BJ (cell line): ENCODE measurements at regions of chr4 and their contacts with region 1.

Region 1: GRCh38 chr4:40924096-40924792 is 174.5 kb downstream of the NSUN7 start:
- DNase-seq: no peak
- H3K4me3 ChIP-seq: no peak overlapping the region
- H3K27me3 ChIP-seq: no peaks in the 10 kb centered on the region
- CTCF ChIP-seq: peak; percentile 94

Region 2: GRCh38 chr4:40140196-40140595 is 784.0 kb before region 1 on chr4:
- CTCF ChIA-PET with region 1: no interaction called
- POLR2A ChIA-PET with region 1: no interaction called
- DNase-seq: no peak
- H3K4me3 ChIP-seq: no peak overlapping the region
- H3K27me3 ChIP-seq: no peaks in the 10 kb centered on the region
- CTCF ChIP-seq: no peak

Region 3: GRCh38 chr4:40632080-40632479 is 292.2 kb before region 1 on chr4:
- CTCF ChIA-PET with region 1: no interaction called
- POLR2A ChIA-PET with region 1: no interaction called
- DNase-seq: no peak
- H3K4me3 ChIP-seq: no peak overlapping the region
- H3K27me3 ChIP-seq: no peaks in the 10 kb centered on the region
- CTCF ChIP-seq: no peak

Region 4: GRCh38 chr4:40897557-40898203 is 26.6 kb before region 1 on chr4:
- CTCF ChIA-PET with region 1: interaction called, 18 read pairs
- POLR2A ChIA-PET with region 1: no interaction called
- DNase-seq: no peak
- H3K4me3 ChIP-seq: no peak overlapping the region
- H3K27me3 ChIP-seq: no peaks in the 10 kb centered on the region
- CTCF ChIP-seq: peak; percentile 74

Region 5: DNA sequence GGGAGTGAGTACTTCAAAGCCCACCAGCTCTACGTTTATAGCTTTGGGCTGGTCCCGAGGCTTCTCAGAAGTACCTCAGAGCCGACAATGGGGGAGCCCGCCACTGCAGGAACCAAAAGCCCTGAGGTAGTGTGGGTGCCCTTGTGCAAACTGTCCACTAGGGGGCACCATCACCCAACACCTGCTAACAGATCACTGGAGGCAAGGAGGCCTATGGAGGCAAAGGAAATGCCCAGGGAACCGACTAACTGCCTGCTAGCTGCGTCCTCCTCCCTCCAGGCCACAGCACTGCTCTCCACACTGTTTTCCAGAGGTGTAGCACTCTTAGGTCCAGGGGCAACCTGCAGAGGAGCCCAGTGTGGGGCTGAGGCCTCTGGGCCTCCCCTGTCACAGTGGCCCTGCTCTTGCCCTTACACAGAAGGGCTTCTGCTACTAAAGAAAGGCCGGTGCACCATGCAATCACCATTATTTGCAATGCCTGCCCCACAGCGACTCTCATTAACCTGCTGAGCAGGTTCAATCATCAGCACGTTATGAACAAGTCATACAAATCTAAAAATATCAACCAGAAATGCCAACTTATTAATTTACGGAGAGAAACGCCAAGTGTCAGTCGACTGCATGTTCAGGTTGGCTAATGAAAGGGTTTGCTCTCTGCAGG is 15.4 kb before region 1 on chr4:
- CTCF ChIA-PET with region 1: interaction called, 181 read pairs
- POLR2A ChIA-PET with region 1: no interaction called
- DNase-seq: no peak
- H3K4me3 ChIP-seq: no peak overlapping the region
- H3K27me3 ChIP-seq: no peaks in the 10 kb centered on the region
- CTCF ChIP-seq: peak; percentile 91

Region 6: DNA sequence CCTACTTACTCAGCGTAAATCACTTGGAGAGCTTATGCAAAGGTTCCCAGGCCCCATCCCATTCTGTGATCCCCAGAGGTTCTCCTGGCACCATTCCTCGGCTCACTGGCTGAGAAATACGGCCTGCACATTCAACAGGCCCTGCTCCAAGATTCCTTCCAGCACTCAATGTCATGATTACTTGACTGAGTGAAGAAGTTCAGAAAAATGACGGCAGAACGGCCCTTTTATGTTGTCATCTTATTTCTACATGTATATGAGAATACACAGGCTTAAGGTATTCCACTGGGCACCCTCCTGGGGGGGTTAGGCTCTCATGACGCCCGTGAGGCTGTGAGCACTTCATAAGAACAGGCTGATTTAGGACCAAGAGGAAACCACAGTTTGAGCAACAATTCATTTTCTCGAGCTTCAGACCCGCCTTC is 16.1 kb after region 1 on chr4:
- CTCF ChIA-PET with region 1: interaction called, 17 read pairs
- POLR2A ChIA-PET with region 1: no interaction called
- DNase-seq: no peak
- H3K4me3 ChIP-seq: no peak overlapping the region
- H3K27me3 ChIP-seq: no peaks in the 10 kb centered on the region
- CTCF ChIP-seq: no peak

Region 7: GRCh38 chr4:40976343-40976742 is 52.1 kb after region 1 on chr4:
- CTCF ChIA-PET with region 1: interaction called, 11 read pairs
- POLR2A ChIA-PET with region 1: no interaction called
- DNase-seq: no peak
- H3K4me3 ChIP-seq: no peak overlapping the region
- H3K27me3 ChIP-seq: no peaks in the 10 kb centered on the region
- CTCF ChIP-seq: peak; percentile 62

Region 8: GRCh38 chr4:41214136-41214824 is 290.0 kb after region 1 on chr4 and contains the start of gene APBB2:
- CTCF ChIA-PET with region 1: interaction called, 80 read pairs
- POLR2A ChIA-PET with region 1: interaction called, 17 read pairs
- DNase-seq: no peak
- H3K4me3 ChIP-seq: peak within 1 kb of the TSS; percentile 77
- H3K27me3 ChIP-seq: no peaks in the 10 kb centered on the region
- CTCF ChIP-seq: peak; percentile 80
- polyA plus RNA-seq, gene APBB2: 50.3 and 52.9 TPM in 2 replicates

Region 9: GRCh38 chr4:41257257-41257901 is 333.1 kb after region 1 on chr4:
- CTCF ChIA-PET with region 1: interaction called, 18 read pairs
- POLR2A ChIA-PET with region 1: no interaction called
- DNase-seq: no peak
- H3K4me3 ChIP-seq: peak overlapping the region; percentile 88
- H3K27me3 ChIP-seq: peaks cover 3% of the 10 kb centered on the region; the same call in 1 of the 2 replicates
- CTCF ChIP-seq: no peak